Heart right ventricle (tissue), 16 donors: ENCODE measurements at regions of chr14 and their contacts with region 1.

Region 1: GRCh38 chr14:68795597-68796417 is 2.9 kb upstream of the ZFP36L1 start:
- DNase-seq: peak; percentile 89 to 92
- ATAC-seq: peak; percentile 39 to 79 (median 48)
- H3K4me3 ChIP-seq: peak overlapping the region; percentile 60 to 93 (median 87)
- H3K27ac ChIP-seq: peak overlapping the region; percentile 99 to 100 (median 100)
- H3K4me1 ChIP-seq: peaks cover 0 to 36% (median 9%) of the 10 kb centered on the region in 9 donors
- H3K27me3 ChIP-seq: no peaks in the 10 kb centered on the region
- CTCF ChIP-seq: peak; percentile 66 to 87 (median 79)

Region 2: DNA sequence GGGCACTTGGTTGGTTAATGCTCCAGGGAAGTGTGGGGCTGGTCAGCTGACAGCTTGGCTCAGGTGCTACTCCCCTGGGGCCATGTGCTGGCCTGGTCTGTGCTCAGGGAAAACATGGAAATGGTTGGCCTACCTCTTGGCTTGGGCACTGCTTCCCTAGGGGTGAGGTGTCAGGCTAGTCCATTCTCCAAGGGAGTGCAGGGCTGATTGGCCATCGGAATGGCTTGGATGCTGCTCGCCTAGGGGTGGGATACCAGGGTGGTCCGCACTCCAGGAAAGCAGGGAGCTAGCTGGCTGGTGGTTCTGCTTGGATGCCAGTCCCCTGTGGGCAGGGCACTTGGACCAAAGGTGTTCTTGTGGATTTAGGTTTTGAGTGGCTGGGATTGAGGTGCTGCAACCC is 730.5 kb before region 1 on chr14:
- intact Hi-C with region 1: no loop called
- DNase-seq: no peak
- ATAC-seq: no peak
- H3K4me3 ChIP-seq: no peak overlapping the region
- H3K27ac ChIP-seq: no peak overlapping the region
- H3K4me1 ChIP-seq: peaks cover 0 to 5% (median 0%) of the 10 kb centered on the region in 9 donors
- H3K27me3 ChIP-seq: no peaks in the 10 kb centered on the region
- CTCF ChIP-seq: no peak

Region 3: GRCh38 chr14:68392393-68393141 is 403.2 kb before region 1 on chr14:
- intact Hi-C with region 1: loop called in 4 of 10 experiments (anchors 5 to 10 kb)
- DNase-seq: peak; percentile 46 to 50
- ATAC-seq: peak; percentile 27 to 57 (median 51)
- H3K4me3 ChIP-seq: no peak overlapping the region
- H3K27ac ChIP-seq: peak overlapping the region in 9 of 10 donors; percentile 20 to 91 (median 73)
- H3K4me1 ChIP-seq: peaks cover 12 to 74% (median 55%) of the 10 kb centered on the region in 9 donors
- H3K27me3 ChIP-seq: no peaks in the 10 kb centered on the region
- CTCF ChIP-seq: no peak

Region 4: DNA sequence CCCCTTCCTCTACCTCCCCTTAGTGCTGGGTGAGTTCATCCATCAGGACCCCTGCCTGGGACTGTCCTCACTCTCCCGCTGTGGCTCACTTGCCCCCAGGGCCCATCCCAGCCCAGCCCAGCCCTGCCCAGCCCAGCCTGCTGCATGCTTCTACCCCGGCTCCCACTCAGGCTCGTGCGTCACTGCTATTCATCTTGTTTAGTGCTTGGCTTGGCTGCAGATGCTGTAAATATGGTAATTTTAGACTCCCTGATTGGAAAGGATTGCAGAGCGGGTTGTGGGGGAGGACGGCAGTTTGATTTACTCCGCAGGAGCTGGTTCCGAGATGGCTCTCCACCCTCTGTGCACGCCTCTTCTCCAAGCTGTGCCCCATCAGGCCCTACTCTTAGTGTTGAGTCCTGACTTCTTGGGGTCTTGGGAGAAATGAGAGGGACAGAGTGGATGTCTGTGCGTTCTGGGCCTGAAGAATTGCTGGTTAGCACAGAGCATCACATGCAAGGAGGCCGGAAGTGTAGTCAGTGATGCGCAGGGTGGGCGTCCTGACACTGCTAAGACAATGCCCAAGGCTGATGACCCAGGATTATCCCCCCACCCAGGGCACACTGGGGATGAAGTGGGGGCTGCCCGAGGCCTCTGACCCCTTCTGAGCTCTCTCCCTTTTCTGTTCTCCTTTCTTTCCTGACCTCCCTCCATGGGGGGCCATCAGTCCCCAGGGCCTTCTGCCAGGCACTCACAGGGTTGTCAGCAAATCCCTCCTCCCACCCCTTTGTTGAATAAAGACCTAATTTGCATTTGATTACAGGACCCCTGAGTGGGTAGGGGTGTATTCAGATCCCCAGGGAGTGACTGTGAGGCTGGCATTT is 247.4 kb before region 1 on chr14:
- intact Hi-C with region 1: loop called in 5 of 10 experiments (anchors 1 to 10 kb)
- DNase-seq: peak; percentile 87 to 94
- ATAC-seq: peak; percentile 87 to 95 (median 93)
- H3K4me3 ChIP-seq: no peak overlapping the region
- H3K27ac ChIP-seq: peak overlapping the region; percentile 91 to 97 (median 94)
- H3K4me1 ChIP-seq: peaks cover 28 to 85% (median 69%) of the 10 kb centered on the region in 9 donors
- H3K27me3 ChIP-seq: no peaks in the 10 kb centered on the region
- CTCF ChIP-seq: no peak

Region 5: DNA sequence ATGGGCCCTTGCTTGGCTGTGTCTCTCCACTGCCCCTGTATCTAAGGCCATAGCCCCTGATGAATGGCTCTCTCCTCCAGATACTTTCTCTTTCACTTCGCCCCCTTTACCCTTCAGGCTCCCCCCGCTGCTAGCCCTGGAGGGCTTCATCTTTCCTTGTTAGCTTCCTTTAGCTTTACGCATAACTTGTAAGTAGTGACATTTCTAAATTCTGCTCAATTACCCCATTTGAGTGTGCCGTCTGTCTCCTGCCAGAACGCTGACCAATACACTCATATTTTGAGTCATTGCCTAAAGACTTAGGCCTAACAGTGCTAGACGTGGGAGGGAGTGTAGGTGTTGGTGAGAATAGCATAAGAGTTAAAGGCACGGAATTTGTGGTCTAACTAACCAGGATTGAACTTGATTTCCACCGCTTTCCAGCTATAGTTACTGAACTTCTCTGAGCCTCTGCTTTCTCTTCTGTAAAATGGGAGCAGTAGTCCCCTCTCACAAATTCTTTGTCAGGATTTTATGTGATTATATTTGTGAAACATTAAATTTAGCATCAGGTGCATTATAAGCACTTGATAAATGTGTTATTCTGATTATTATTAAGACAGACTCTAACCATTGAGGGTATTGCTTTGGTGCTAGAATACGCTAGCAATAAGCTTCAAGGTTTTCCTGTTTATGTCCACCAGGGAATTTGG is 132.3 kb before region 1 on chr14:
- intact Hi-C with region 1: loop called in 1 of 10 experiments (anchors 5 kb)
- DNase-seq: no peak
- ATAC-seq: no peak
- H3K4me3 ChIP-seq: peak overlapping the region in 1 of 10 donors; percentile 18
- H3K27ac ChIP-seq: peak overlapping the region in 3 of 10 donors; percentile 46 to 74 (median 70)
- H3K4me1 ChIP-seq: peaks cover 16 to 75% (median 49%) of the 10 kb centered on the region in 9 donors
- H3K27me3 ChIP-seq: no peaks in the 10 kb centered on the region
- CTCF ChIP-seq: no peak

Region 6: DNA sequence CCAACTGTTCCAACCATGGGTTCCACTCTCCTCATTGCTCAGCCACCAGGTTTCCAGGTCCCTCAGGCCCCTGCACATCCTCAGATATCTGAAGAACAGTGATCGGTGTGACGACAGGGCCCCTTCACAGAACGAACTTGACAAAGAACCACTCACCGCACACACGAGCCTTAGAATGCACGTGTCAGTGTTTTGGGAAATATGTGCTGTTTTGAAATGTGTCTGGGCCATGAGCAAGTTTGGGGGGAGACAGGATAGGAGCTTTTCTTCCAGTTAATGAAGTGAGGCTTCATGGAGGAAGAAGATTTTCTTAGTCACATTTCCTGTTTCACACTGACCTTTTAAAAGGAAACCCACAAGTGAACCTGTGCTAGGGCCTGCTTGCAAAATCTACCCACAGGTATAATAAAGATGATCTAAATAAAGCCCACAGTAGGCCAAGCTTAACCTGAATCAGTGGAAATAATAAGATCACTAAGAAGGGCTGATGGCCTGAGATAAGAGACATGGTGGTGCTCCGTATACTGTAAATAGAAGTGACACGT is 61.5 kb before region 1 on chr14:
- intact Hi-C with region 1: loop called in 1 of 10 experiments (anchors 5 kb)
- DNase-seq: no peak
- ATAC-seq: peak in 2 of 8 donors; percentile 3
- H3K4me3 ChIP-seq: no peak overlapping the region
- H3K27ac ChIP-seq: peak overlapping the region in 4 of 10 donors; percentile 5 to 91 (median 60)
- H3K4me1 ChIP-seq: peaks cover 12 to 77% (median 66%) of the 10 kb centered on the region in 9 donors
- H3K27me3 ChIP-seq: peaks cover 0 to 7% (median 0%) of the 10 kb centered on the region in 7 donors
- CTCF ChIP-seq: no peak

Region 7: DNA sequence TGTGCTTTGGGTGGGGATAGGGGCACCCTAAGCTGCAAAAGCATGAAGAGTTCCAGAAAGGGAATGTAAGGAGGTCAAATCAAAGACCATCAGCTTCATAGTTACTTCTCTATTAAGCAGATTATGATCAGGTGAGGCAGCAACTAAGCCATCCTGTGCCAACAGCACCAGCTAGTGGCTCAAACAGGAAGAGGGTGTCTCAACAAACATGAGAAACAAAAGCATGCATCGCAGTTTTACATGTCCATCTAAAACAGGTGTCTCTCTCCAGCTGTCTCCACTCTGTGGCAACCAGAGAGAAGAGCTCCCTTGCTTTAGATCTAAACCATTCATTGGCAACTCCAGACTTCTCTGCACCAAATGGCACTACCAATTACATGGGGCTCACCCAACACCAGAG is 130.4 kb after region 1 on chr14:
- intact Hi-C with region 1: no loop called
- DNase-seq: no peak
- ATAC-seq: no peak
- H3K4me3 ChIP-seq: no peak overlapping the region
- H3K27ac ChIP-seq: peak overlapping the region in 1 of 10 donors; percentile 90
- H3K4me1 ChIP-seq: peaks cover 23 to 89% (median 60%) of the 10 kb centered on the region in 9 donors
- H3K27me3 ChIP-seq: no peaks in the 10 kb centered on the region
- CTCF ChIP-seq: peak in 3 of 9 donors; percentile 11 to 33 (median 28)

Region 8: DNA sequence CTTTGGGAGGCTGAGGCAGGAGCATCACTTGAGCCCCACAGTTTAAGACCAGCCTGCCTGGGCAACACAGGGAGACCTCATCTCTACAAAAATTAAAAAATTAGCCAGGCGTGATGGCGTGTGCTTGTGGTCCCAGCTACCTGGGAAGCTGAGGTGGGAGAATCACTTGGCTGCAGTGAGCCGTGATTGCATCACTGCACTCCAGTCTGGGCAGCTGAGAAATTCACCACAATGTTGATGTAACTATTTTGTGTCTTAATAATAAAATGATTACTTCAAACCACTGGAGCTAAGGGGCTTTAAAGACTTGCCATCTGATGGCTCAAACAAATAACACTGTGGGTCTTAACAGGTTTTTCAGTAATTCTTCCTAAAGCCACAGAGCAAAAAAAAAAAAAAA is 591.5 kb after region 1 on chr14:
- intact Hi-C with region 1: no loop called
- DNase-seq: no peak
- ATAC-seq: no peak
- H3K4me3 ChIP-seq: no peak overlapping the region
- H3K27ac ChIP-seq: no peak overlapping the region
- H3K4me1 ChIP-seq: peaks cover 0 to 21% (median 11%) of the 10 kb centered on the region in 9 donors
- H3K27me3 ChIP-seq: no peaks in the 10 kb centered on the region
- CTCF ChIP-seq: no peak